T-cell (primary cell): ENCODE measurements at regions of chr5 and their contacts with region 1.

Region 1: DNA sequence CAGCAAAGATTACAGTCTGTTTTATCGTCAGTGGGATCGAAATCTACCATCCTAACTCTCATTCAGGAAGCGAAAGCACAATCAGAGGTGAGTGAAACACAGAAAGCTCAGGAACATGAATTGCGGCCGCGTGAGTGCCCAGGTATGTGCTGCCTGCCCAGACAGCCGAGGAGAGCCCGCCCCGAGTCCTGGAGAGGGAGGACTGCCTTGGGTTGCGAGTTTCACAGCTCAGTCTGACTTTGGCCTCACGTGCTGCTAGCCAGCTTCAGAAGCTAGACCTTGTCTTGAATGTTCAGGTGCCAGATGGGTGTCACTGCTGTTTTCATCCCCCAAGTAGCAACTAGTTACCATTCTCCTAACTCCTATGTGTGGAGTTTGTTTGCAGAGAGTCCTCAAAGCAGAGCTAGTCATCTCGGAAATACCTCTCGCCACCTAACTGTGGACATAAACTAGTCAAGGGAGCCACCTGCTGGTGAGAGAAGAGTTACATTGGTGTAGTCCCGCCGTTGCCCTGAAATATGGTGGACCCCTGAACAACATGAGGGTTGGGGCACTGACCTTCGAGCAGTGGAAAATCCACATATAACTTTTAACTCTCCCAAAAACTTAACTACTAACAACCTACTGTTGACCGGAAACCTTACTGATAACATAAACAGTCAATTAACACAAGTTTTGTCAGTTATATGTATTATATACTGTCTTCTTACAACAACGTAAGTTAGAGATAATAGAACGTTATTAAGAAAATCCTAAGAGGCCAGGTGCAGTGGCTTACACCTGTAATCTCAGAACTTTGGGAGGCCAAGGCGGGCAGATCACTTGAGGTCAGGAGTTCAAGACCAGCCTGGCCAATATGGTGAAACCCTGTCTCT is 80.9 kb downstream of the GOLPH3 start:
- DNase-seq: peak; percentile 17 to 79 (median 54)
- ATAC-seq: peak; percentile 85 to 88 (median 86)
- H3K4me3 ChIP-seq: no peak overlapping the region
- H3K4me3 Mint-ChIP-seq: no peak overlapping the region
- H3K27ac ChIP-seq: no peak overlapping the region
- H3K27ac Mint-ChIP-seq: peak overlapping the region in 1 of 2 donors; percentile 12
- H3K4me1 ChIP-seq: peaks cover 0 to 5% of the 10 kb centered on the region in 2 experiments
- H3K4me1 Mint-ChIP-seq: peaks cover 4 to 6% (median 5%) of the 10 kb centered on the region in 3 donors
- H3K27me3 ChIP-seq: no peaks in the 10 kb centered on the region
- H3K27me3 Mint-ChIP-seq: no peaks in the 10 kb centered on the region

Region 2: DNA sequence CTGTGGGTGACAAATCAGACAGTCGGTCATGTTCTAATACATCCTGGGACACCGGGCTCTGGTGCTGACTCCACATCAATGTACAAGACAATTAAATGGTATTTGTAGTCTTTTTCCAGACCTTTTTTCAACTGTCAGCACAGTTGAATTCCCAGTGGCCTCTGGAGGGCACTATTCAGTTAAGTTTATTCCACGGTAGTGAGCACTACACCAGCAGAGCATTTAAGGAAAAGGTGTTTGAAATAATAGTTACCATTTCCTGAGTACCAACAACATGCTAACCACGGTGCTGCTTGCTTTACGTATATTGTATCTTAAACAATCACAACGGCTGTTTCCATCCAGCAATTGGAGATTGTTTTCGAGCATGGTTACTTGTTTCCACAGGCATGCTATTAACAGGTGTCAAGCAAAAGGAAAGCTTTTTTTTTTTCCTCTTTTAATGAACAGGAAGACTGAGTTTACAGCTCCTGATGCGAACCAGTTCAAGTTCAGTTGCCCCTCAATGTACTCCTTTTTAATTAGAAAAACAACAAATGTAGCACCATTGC is 267.6 kb before region 1 on chr5:
- CTCF ChIA-PET with region 1: interaction called, 7 to 15 read pairs
- POLR2A ChIA-PET with region 1: no interaction called
- DNase-seq: peak in 30 of 35 experiments; percentile 2 to 65 (median 25)
- ATAC-seq: peak; percentile 64 to 96 (median 81)
- H3K4me3 ChIP-seq: no peak overlapping the region
- H3K4me3 Mint-ChIP-seq: peak overlapping the region in 2 of 3 donors; percentile 34 to 37
- H3K27ac ChIP-seq: no peak overlapping the region
- H3K27ac Mint-ChIP-seq: no peak overlapping the region
- H3K4me1 ChIP-seq: peaks cover 0 to 5% of the 10 kb centered on the region in 2 experiments
- H3K4me1 Mint-ChIP-seq: peaks cover 2 to 8% (median 6%) of the 10 kb centered on the region in 3 donors
- H3K27me3 ChIP-seq: no peaks in the 10 kb centered on the region
- H3K27me3 Mint-ChIP-seq: peaks cover 0 to 10% of the 10 kb centered on the region in 2 donors

Region 3: DNA sequence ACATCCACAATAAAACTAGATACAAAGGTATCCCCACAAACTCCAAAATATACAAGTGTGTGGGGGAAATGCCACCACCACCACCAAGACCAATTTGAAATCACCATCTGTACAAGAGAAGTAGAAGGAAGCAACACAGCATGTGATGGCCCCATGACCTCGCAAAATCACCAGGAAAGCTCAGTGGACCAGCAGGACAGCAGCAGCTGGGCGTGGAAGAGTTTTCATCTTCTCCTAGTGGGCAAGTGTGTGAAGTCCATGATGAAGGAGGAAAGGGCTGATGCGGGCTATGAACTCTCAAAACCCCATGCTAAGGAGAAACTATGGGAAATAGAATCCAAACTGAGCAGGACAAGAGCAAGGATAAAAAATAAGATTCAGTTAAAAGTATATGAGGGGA is 22.8 kb after region 1 on chr5:
- CTCF ChIA-PET with region 1: interaction called in 1 of 2 experiments, 12 read pairs
- POLR2A ChIA-PET with region 1: no interaction called
- DNase-seq: no peak
- ATAC-seq: no peak
- H3K4me3 ChIP-seq: no peak overlapping the region
- H3K4me3 Mint-ChIP-seq: no peak overlapping the region
- H3K27ac ChIP-seq: no peak overlapping the region
- H3K27ac Mint-ChIP-seq: peak overlapping the region; percentile 6 to 9
- H3K4me1 ChIP-seq: no peaks in the 10 kb centered on the region
- H3K4me1 Mint-ChIP-seq: peaks cover 5 to 22% (median 16%) of the 10 kb centered on the region in 3 donors
- H3K27me3 ChIP-seq: no peaks in the 10 kb centered on the region
- H3K27me3 Mint-ChIP-seq: no peaks in the 10 kb centered on the region